Transverse colon (tissue), 4 donors: ENCODE measurements at regions of chr6 and their contacts with region 1.

Region 1: DNA sequence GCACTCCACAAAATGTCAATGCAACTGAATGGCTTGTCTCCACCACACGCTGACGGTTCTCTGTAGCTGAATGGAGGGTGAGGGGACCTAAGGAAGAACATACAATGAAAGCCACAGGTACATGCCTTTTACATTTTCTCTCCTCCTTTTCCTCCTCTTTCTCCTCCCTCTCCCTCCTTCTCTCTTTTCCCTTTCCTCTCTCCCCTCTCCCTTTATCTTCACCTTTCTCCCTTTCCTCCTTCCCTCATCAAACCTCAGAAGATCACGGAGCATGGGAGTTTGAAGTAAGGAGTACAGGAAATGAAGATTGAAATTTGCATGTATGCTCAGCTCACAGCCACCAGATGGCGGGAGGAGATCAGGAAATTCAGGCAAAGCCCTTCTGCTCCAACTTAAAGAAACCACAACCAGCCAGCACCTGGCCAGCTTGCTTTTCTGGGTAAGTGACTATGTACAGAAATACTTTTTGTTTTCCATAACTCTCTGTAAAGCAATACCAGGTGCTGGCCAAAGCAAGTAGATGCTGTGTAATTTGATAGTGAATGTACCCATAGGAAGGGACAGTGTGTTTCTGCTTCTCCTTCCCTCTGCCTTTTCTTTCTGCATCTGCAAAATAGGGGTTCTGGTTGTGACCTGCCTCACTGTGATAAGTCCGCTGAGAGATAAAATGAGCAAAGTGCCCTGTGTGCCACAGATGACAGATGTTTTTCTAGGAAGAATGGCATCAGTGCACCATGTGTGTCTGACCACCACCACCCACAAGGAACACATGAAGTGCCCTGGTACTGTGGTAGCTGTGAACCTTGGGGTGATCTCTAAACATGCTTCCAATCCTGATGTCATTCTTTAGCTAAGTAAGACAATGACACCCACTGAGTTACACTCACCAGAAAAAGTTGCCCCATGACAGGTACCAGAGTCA is 18.6 kb upstream of the FOXO3 start:
- DNase-seq: peak; percentile 83
- H3K4me3 ChIP-seq: no peak overlapping the region
- H3K27ac ChIP-seq: peak overlapping the region in 1 of 4 donors; percentile 41
- H3K4me1 ChIP-seq: peaks cover 0 to 8% (median 5%) of the 10 kb centered on the region in 4 donors
- H3K27me3 ChIP-seq: no peaks in the 10 kb centered on the region
- CTCF ChIP-seq: peak; percentile 79 to 95 (median 83)
- EP300 ChIP-seq: no peak
- POLR2A ChIP-seq: no peak

Region 2: GRCh38 chr6:108782179-108783041 is 240.3 kb after region 1 on chr6:
- in situ Hi-C with region 1: loop called in 2 of 4 experiments (anchors 5 to 10 kb)
- intact Hi-C with region 1: loop called (anchors 5 kb)
- DNase-seq: peak; percentile 92
- H3K4me3 ChIP-seq: peak overlapping the region; percentile 34 to 54 (median 42)
- H3K27ac ChIP-seq: peak overlapping the region; percentile 46 to 80 (median 68)
- H3K4me1 ChIP-seq: peaks cover 5 to 19% (median 9%) of the 10 kb centered on the region in 4 donors
- H3K27me3 ChIP-seq: no peaks in the 10 kb centered on the region
- CTCF ChIP-seq: peak; percentile 71 to 88 (median 79)
- EP300 ChIP-seq: no peak
- POLR2A ChIP-seq: no peak

Region 3: GRCh38 chr6:108848116-108848868 is 306.2 kb after region 1 on chr6 and contains the start of gene ARMC2:
- in situ Hi-C with region 1: loop called in 1 of 4 experiments (anchors 25 kb)
- intact Hi-C with region 1: no loop called
- DNase-seq: peak; percentile 95
- H3K4me3 ChIP-seq: peak within 1 kb of the TSS; percentile 36 to 57 (median 52)
- H3K27ac ChIP-seq: peak within 1 kb of the TSS; percentile 65 to 84 (median 80)
- H3K4me1 ChIP-seq: peaks cover 0 to 22% (median 15%) of the 10 kb centered on the region in 4 donors
- H3K27me3 ChIP-seq: no peaks in the 10 kb centered on the region
- CTCF ChIP-seq: no peak
- EP300 ChIP-seq: no peak
- POLR2A ChIP-seq: peak; percentile 62
- total RNA-seq, gene ARMC2: 2.0 to 7.5 (median 3.0) TPM

Region 4: GRCh38 chr6:108914235-108915022 is 372.3 kb after region 1 on chr6:
- in situ Hi-C with region 1: no loop called
- intact Hi-C with region 1: no loop called
- DNase-seq: no peak
- H3K4me3 ChIP-seq: no peak overlapping the region
- H3K27ac ChIP-seq: peak overlapping the region in 1 of 4 donors; percentile 3
- H3K4me1 ChIP-seq: peaks cover 0 to 4% (median 0%) of the 10 kb centered on the region in 4 donors
- H3K27me3 ChIP-seq: no peaks in the 10 kb centered on the region
- CTCF ChIP-seq: peak; percentile 22 to 37 (median 32)
- EP300 ChIP-seq: no peak
- POLR2A ChIP-seq: no peak

Region 5: GRCh38 chr6:109009236-109009961 is 467.3 kb after region 1 on chr6:
- in situ Hi-C with region 1: no loop called
- intact Hi-C with region 1: loop called (anchors 10 kb)
- DNase-seq: peak; percentile 96
- H3K4me3 ChIP-seq: peak overlapping the region; percentile 64 to 98 (median 82)
- H3K27ac ChIP-seq: peak overlapping the region; percentile 96 to 99 (median 98)
- H3K4me1 ChIP-seq: peaks cover 12 to 66% (median 21%) of the 10 kb centered on the region in 4 donors
- H3K27me3 ChIP-seq: no peaks in the 10 kb centered on the region
- CTCF ChIP-seq: peak; percentile 30 to 59 (median 34)
- EP300 ChIP-seq: no peak
- POLR2A ChIP-seq: peak; percentile 93

Region 6: DNA sequence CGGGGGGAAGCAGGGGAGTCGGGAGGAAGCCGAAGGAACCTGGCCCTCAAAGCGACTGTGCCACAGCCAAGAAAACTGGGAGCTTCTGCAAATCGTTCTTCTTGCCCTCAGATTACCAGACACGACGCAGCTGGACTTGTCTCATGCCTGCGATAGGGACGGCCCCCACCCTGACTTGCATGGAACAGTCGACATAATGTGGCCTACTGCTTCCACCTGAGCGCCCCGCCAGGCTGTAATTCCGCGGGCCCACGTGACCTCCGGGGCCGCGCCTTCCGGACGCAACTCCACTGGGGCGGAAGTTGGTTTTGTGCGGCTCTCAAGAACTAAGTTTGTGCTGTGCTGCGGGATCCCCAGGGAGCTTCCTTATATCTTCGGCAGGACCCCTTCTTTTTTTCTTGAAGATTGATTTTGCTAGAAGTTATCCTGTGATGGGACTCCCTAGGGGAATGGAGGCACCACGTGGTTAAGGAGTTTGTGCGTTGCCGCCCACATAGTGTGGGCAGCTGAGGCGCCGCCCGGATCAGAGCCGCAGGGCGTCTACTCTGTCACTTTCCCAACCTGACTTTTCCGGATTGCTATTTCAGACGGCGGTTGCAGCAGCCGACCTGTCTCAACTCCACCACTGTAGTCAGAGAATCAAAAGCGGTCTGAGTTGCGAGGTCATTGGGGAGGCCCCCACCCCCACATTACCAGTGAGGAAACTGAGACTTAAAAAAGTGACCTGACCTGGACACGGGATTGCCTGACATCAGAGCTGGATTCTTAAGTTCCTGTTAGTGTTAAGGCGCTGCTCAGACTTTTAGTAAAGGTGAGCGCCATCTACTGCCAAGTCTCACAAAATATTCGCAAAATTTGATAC is 840.7 kb after region 1 on chr6:
- in situ Hi-C with region 1: loop called in 1 of 4 experiments (anchors 25 kb)
- intact Hi-C with region 1: no loop called
- DNase-seq: peak; percentile 94
- H3K4me3 ChIP-seq: peak overlapping the region; percentile 33 to 99 (median 64)
- H3K27ac ChIP-seq: peak overlapping the region; percentile 97 to 100 (median 99)
- H3K4me1 ChIP-seq: peaks cover 11 to 47% (median 30%) of the 10 kb centered on the region in 4 donors
- H3K27me3 ChIP-seq: no peaks in the 10 kb centered on the region
- CTCF ChIP-seq: peak; percentile 31 to 73 (median 49)
- EP300 ChIP-seq: no peak
- POLR2A ChIP-seq: peak; percentile 73